Naive thymus-derived CD4-positive, alpha-beta T cell (primary cell): ENCODE measurements at regions of chr13 and their contacts with region 1.

Region 1: DNA sequence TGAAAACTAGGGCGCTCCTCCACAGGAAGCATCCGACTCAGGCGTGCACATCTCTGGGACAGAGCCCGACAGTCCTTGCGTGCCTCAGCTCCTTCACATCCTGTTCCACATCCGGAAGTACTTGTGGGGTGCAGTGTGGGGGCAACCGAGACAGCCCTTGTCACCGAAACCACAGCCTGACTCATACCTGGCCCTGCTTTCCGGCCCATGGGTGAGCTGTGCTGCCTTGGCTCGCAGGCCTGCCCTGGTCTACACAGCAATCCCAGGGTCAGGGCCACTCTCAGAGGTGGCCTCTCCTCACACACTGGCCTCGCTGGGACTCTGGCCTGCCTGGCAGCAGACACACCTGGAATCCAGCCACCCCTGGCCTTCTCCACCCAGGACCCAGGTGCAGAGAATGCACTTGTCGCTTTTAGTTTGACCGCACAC is 100.4 kb downstream of the STK24 start:
- DNase-seq: peak; percentile 43 to 86 (median 78)
- ATAC-seq: peak; percentile 96
- H3K4me3 ChIP-seq: peak overlapping the region; percentile 48
- H3K4me3 Mint-ChIP-seq: peak overlapping the region; percentile 52 to 86 (median 76)
- H3K27ac ChIP-seq: peak overlapping the region; percentile 52
- H3K27ac Mint-ChIP-seq: peak overlapping the region; percentile 82 to 94 (median 86)
- H3K4me1 ChIP-seq: peaks cover 36 to 37% of the 10 kb centered on the region in 2 donors
- H3K4me1 Mint-ChIP-seq: peaks cover 55 to 76% (median 67%) of the 10 kb centered on the region in 7 donors
- H3K27me3 ChIP-seq: no peaks in the 10 kb centered on the region
- H3K27me3 Mint-ChIP-seq: no peaks in the 10 kb centered on the region

Region 2: GRCh38 chr13:97753942-97754670 is 722.4 kb before region 1 on chr13:
- CTCF ChIA-PET with region 1: no interaction called
- POLR2A ChIA-PET with region 1: no interaction called
- intact Hi-C with region 1: no loop called
- DNase-seq: no peak
- ATAC-seq: no peak
- H3K4me3 ChIP-seq: no peak overlapping the region
- H3K4me3 Mint-ChIP-seq: no peak overlapping the region
- H3K27ac ChIP-seq: no peak overlapping the region
- H3K27ac Mint-ChIP-seq: no peak overlapping the region
- H3K4me1 ChIP-seq: no peaks in the 10 kb centered on the region
- H3K4me1 Mint-ChIP-seq: no peaks in the 10 kb centered on the region
- H3K27me3 ChIP-seq: no peaks in the 10 kb centered on the region
- H3K27me3 Mint-ChIP-seq: peaks cover 2 to 47% (median 17%) of the 10 kb centered on the region in 5 donors

Region 3: GRCh38 chr13:98445340-98446233 is 31.0 kb before region 1 on chr13:
- CTCF ChIA-PET with region 1: interaction called, 3 read pairs
- POLR2A ChIA-PET with region 1: interaction called, 3 read pairs
- intact Hi-C with region 1: loop called in 1 of 2 experiments (anchors 1 kb)
- DNase-seq: peak; percentile 59 to 82 (median 73)
- ATAC-seq: peak; percentile 95
- H3K4me3 ChIP-seq: no peak overlapping the region
- H3K4me3 Mint-ChIP-seq: peak overlapping the region in 9 of 10 donors; percentile 8 to 76 (median 68)
- H3K27ac ChIP-seq: peak overlapping the region; percentile 58
- H3K27ac Mint-ChIP-seq: peak overlapping the region; percentile 46 to 92 (median 88)
- H3K4me1 ChIP-seq: peaks cover 10 to 15% of the 10 kb centered on the region in 2 donors
- H3K4me1 Mint-ChIP-seq: peaks cover 0 to 23% (median 14%) of the 10 kb centered on the region in 7 donors
- H3K27me3 ChIP-seq: no peaks in the 10 kb centered on the region
- H3K27me3 Mint-ChIP-seq: no peaks in the 10 kb centered on the region

Region 4: GRCh38 chr13:98509271-98510155 is 33.0 kb after region 1 on chr13:
- CTCF ChIA-PET with region 1: no interaction called
- POLR2A ChIA-PET with region 1: no interaction called
- intact Hi-C with region 1: loop called (anchors 1 to 2 kb)
- DNase-seq: peak in 2 of 9 donors; percentile 21 to 43
- ATAC-seq: peak; percentile 91
- H3K4me3 ChIP-seq: no peak overlapping the region
- H3K4me3 Mint-ChIP-seq: peak overlapping the region; percentile 18 to 70 (median 28)
- H3K27ac ChIP-seq: no peak overlapping the region
- H3K27ac Mint-ChIP-seq: peak overlapping the region; percentile 18 to 79 (median 72)
- H3K4me1 ChIP-seq: peaks cover 32 to 34% of the 10 kb centered on the region in 2 donors
- H3K4me1 Mint-ChIP-seq: peaks cover 63 to 99% (median 96%) of the 10 kb centered on the region in 7 donors
- H3K27me3 ChIP-seq: no peaks in the 10 kb centered on the region
- H3K27me3 Mint-ChIP-seq: no peaks in the 10 kb centered on the region

Region 5: GRCh38 chr13:98565726-98566565 is 89.4 kb after region 1 on chr13:
- CTCF ChIA-PET with region 1: no interaction called
- POLR2A ChIA-PET with region 1: interaction called, 5 read pairs
- intact Hi-C with region 1: loop called (anchors 1 kb)
- DNase-seq: no peak
- ATAC-seq: no peak
- H3K4me3 ChIP-seq: no peak overlapping the region
- H3K4me3 Mint-ChIP-seq: peak overlapping the region; percentile 77 to 99 (median 84)
- H3K27ac ChIP-seq: peak overlapping the region; percentile 69
- H3K27ac Mint-ChIP-seq: peak overlapping the region; percentile 84 to 97 (median 96)
- H3K4me1 ChIP-seq: peaks cover 50 to 87% of the 10 kb centered on the region in 2 donors
- H3K4me1 Mint-ChIP-seq: peaks cover 67 to 99% (median 93%) of the 10 kb centered on the region in 7 donors
- H3K27me3 ChIP-seq: no peaks in the 10 kb centered on the region
- H3K27me3 Mint-ChIP-seq: no peaks in the 10 kb centered on the region

Region 6: GRCh38 chr13:98576963-98577822 is 100.6 kb after region 1 on chr13 and contains the start of gene STK24:
- CTCF ChIA-PET with region 1: no interaction called
- POLR2A ChIA-PET with region 1: interaction called, 3 read pairs
- intact Hi-C with region 1: loop called (anchors 1 kb)
- DNase-seq: peak in 5 of 9 donors; percentile 34 to 87 (median 66)
- ATAC-seq: peak; percentile 85
- H3K4me3 ChIP-seq: peak within 1 kb of the TSS; percentile 72
- H3K4me3 Mint-ChIP-seq: peak within 1 kb of the TSS; percentile 84 to 99 (median 93)
- H3K27ac ChIP-seq: peak within 1 kb of the TSS; percentile 85
- H3K27ac Mint-ChIP-seq: peak within 1 kb of the TSS; percentile 84 to 96 (median 93)
- H3K4me1 ChIP-seq: peaks cover 26 to 35% of the 10 kb centered on the region in 2 donors
- H3K4me1 Mint-ChIP-seq: peaks cover 35 to 48% (median 37%) of the 10 kb centered on the region in 7 donors
- H3K27me3 ChIP-seq: no peaks in the 10 kb centered on the region
- H3K27me3 Mint-ChIP-seq: no peaks in the 10 kb centered on the region
- total RNA-seq, gene STK24: 90.1 to 148 (median 121) TPM

Region 7: GRCh38 chr13:98672944-98673545 is 196.5 kb after region 1 on chr13:
- CTCF ChIA-PET with region 1: no interaction called
- POLR2A ChIA-PET with region 1: no interaction called
- intact Hi-C with region 1: loop called in 1 of 2 experiments (anchors 1 kb)
- DNase-seq: peak in 8 of 9 donors; percentile 16 to 57 (median 40)
- ATAC-seq: peak; percentile 79
- H3K4me3 ChIP-seq: no peak overlapping the region
- H3K4me3 Mint-ChIP-seq: no peak overlapping the region
- H3K27ac ChIP-seq: no peak overlapping the region
- H3K27ac Mint-ChIP-seq: no peak overlapping the region
- H3K4me1 ChIP-seq: no peaks in the 10 kb centered on the region
- H3K4me1 Mint-ChIP-seq: peaks cover 0 to 8% (median 0%) of the 10 kb centered on the region in 7 donors
- H3K27me3 ChIP-seq: no peaks in the 10 kb centered on the region
- H3K27me3 Mint-ChIP-seq: peaks cover 0 to 11% (median 0%) of the 10 kb centered on the region in 5 donors